ENCODE measurements at regions of chr2 and their contacts with region 1.

Region 1: GRCh38 chr2:147843864-147844696 is 749 bp upstream of the ACVR2A start:
- DNase-seq: peak; percentile 93
- ATAC-seq: peak; percentile 82
- H3K4me3 Mint-ChIP-seq: peak overlapping the region; percentile 82
- H3K27ac Mint-ChIP-seq: peak overlapping the region; percentile 77
- H3K4me1 Mint-ChIP-seq: peaks cover 34% of the 10 kb centered on the region
- H3K27me3 Mint-ChIP-seq: peaks cover 14% of the 10 kb centered on the region

Region 2: GRCh38 chr2:147628971-147629421 is 215.1 kb before region 1 on chr2:
- CTCF ChIA-PET with region 1: no interaction called
- POLR2A ChIA-PET with region 1: no interaction called
- intact Hi-C with region 1: loop called (anchors 2 to 10 kb)
- DNase-seq: no peak
- ATAC-seq: peak; percentile 43
- H3K4me3 Mint-ChIP-seq: no peak overlapping the region
- H3K27ac Mint-ChIP-seq: peak overlapping the region; percentile 59
- H3K4me1 Mint-ChIP-seq: peaks cover 57% of the 10 kb centered on the region
- H3K27me3 Mint-ChIP-seq: no peaks in the 10 kb centered on the region

Region 3: DNA sequence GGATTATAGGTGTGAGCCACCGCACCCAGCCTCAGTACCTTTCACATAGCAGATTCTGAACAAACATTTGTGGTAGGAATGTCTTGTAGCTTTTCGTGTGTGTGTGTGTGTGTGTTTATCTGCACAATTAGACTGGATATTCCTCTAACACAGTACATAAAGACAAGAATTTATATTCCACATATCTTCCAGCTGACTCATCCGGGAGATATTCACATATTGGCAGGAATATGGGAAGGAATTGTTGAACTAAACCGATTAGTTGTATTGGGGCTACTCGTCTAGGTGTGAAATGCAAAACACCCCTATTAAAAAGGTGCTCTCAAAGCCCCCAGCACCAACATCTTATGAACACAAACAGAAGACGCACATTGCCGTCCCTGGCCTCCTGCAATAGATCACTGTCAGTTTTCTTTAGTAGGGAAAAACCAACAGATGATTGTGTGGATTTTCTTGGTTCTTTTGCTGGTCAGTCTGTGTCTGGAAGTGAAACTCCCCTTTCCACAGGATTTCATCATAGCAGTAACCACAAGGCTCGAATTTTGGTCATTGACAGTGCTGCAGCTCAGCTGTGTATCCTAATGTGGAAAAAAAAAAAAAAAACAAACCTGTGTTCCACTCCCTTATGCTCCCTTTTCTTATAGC is 207.7 kb before region 1 on chr2:
- CTCF ChIA-PET with region 1: no interaction called
- POLR2A ChIA-PET with region 1: no interaction called
- intact Hi-C with region 1: loop called (anchors 2 to 10 kb)
- DNase-seq: no peak
- ATAC-seq: no peak
- H3K4me3 Mint-ChIP-seq: no peak overlapping the region
- H3K27ac Mint-ChIP-seq: no peak overlapping the region
- H3K4me1 Mint-ChIP-seq: peaks cover 27% of the 10 kb centered on the region
- H3K27me3 Mint-ChIP-seq: no peaks in the 10 kb centered on the region

Region 4: DNA sequence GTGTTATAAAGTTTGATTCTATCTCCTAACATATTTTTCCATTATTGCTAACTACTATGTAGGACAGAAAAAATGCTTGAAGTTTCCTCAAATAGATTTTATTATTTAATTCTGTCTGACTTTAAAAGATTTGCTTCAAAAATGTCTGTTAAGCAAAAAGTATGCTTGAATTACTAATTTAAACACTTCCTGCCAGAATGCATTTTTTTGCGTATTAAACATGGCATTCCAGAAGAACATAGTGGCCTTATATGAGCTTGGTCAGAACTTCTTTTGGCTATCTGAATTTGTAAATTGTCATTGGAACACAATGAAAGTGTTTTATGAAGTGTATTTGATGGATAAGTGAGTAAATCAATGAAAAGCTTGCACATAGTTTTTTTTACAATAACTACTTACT is 214.6 kb after region 1 on chr2:
- CTCF ChIA-PET with region 1: no interaction called
- POLR2A ChIA-PET with region 1: no interaction called
- intact Hi-C with region 1: no loop called
- DNase-seq: no peak
- ATAC-seq: no peak
- H3K4me3 Mint-ChIP-seq: no peak overlapping the region
- H3K27ac Mint-ChIP-seq: no peak overlapping the region
- H3K4me1 Mint-ChIP-seq: peaks cover 2% of the 10 kb centered on the region
- H3K27me3 Mint-ChIP-seq: no peaks in the 10 kb centered on the region